AG04449 (cell line): ENCODE measurements at regions of chr6 and their contacts with region 1.

Region 1: GRCh38 chr6:110039364-110039980 is 61.4 kb downstream of the GPR6 start:
- DNase-seq: peak; percentile 61
- H3K4me3 ChIP-seq: peak overlapping the region; percentile 45
- CTCF ChIP-seq: peak; percentile 89

Region 2: GRCh38 chr6:109526905-109527628 is 512.4 kb before region 1 on chr6:
- CTCF ChIA-PET with region 1: interaction called, 46 read pairs
- POLR2A ChIA-PET with region 1: no interaction called
- DNase-seq: peak; percentile 14
- H3K4me3 ChIP-seq: no peak overlapping the region
- CTCF ChIP-seq: peak; percentile 54

Region 3: GRCh38 chr6:109690737-109691621 is 348.5 kb before region 1 on chr6 and contains the starts of genes AK9 and FIG4:
- CTCF ChIA-PET with region 1: interaction called, 551 read pairs
- POLR2A ChIA-PET with region 1: interaction called, 3 read pairs
- DNase-seq: peak; percentile 61
- H3K4me3 ChIP-seq: peak within 1 kb of the TSS; percentile 76
- CTCF ChIP-seq: peak; percentile 58

Region 4: GRCh38 chr6:109783250-109783986 is 256.1 kb before region 1 on chr6:
- CTCF ChIA-PET with region 1: interaction called, 12 read pairs
- POLR2A ChIA-PET with region 1: no interaction called
- DNase-seq: no peak
- H3K4me3 ChIP-seq: no peak overlapping the region
- CTCF ChIP-seq: peak; percentile 15

Region 5: DNA sequence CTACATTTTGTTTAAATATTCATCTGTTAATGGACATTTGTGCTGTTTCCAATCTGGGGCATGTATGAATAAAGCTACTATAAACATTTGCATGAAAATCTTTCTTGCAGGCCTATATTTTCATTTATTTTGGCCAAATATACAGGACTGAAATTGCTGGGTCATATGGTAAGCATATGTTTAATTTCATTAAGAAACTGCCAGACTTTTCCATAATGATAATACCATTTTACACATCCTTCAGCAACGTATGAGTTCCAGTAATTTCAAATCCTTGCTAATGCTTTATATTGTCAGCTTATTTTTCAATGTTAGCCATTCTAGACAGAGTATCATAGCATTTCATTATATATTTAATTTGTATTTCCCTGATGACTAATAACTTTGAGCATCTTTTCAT is 10.3 kb before region 1 on chr6:
- CTCF ChIA-PET with region 1: interaction called, 78 read pairs
- POLR2A ChIA-PET with region 1: no interaction called
- DNase-seq: no peak
- H3K4me3 ChIP-seq: no peak overlapping the region
- CTCF ChIP-seq: no peak

Region 6: DNA sequence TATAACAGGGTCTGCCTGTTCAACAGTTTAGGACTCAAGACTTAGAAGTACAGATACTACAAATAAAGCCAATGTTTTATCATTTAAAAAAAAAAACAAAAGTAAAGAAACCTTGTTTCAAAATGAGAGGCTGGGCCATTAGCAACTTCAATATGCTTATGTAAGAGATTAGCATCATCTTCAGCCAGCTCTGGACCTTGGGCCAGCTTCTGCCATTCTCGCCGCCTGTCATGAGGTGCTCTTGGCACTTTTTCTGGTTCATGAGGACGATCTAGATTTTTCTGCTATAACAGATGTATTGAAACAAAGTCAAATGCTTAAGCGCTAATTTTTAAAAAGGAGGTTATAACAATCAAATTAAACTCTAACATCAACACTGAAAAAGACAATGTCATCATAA is 65.8 kb after region 1 on chr6:
- CTCF ChIA-PET with region 1: no interaction called
- POLR2A ChIA-PET with region 1: no interaction called
- DNase-seq: no peak
- H3K4me3 ChIP-seq: no peak overlapping the region
- CTCF ChIP-seq: no peak